ENCODE measurements at regions of chr2 and their contacts with region 1.

Region 1: GRCh38 chr2:1591978-1592907 is 152.1 kb downstream of the PXDN start:
- DNase-seq: peak; percentile 70 to 86 (median 83)
- ATAC-seq: peak; percentile 57 to 87 (median 81)
- H3K4me3 ChIP-seq: peak overlapping the region in 10 of 12 donors; percentile 4 to 40 (median 25)
- H3K27ac ChIP-seq: peak overlapping the region; percentile 24 to 77 (median 60)
- H3K4me1 ChIP-seq: peaks cover 0 to 43% (median 26%) of the 10 kb centered on the region in 12 donors
- H3K27me3 ChIP-seq: peaks cover 0 to 8% (median 0%) of the 10 kb centered on the region in 9 donors
- CTCF ChIP-seq: peak; percentile 42 to 78 (median 67)
- POLR2A ChIP-seq: peak in 1 of 2 donors; percentile 6

Region 2: DNA sequence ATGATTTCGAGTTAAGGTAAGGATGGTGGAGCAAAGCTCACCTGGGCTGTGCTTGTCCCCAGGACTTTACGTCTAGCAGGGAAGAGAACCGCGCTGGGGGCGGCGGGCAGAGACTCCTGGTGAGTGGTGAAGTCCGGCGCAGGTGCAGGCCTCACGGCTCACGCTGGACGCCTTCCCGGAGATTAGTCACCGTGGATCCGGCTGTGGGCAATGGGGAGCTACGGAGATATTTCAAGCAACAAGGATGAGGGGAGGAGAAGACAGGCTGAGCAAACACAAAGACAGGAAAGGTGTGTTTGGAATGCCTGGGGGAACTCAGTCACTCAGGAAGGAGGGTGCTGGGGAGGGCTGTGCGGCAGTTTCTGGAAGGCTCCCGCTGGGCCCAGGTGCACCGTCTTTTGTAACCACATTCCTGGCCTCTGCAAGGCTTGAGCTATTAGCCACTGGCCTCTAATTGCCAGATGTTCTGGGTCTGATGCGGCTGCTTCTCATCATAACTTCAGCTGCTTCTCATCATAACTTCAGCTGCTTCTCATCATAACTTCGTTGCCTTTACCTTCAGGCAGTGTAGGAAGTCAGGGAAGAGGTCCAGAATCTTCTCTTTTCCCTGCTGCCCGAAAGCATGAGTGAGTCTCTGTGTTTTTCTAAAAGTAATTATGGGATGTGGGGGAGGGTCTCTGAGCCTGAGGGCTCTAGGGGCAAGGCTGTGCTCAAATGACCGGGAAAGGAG is 33.1 kb after region 1 on chr2:
- intact Hi-C with region 1: no loop called
- DNase-seq: peak in 4 of 5 donors; percentile 49 to 64 (median 59)
- ATAC-seq: peak; percentile 60 to 83 (median 72)
- H3K4me3 ChIP-seq: no peak overlapping the region
- H3K27ac ChIP-seq: peak overlapping the region in 9 of 12 donors; percentile 2 to 55 (median 21)
- H3K4me1 ChIP-seq: peaks cover 0 to 28% (median 13%) of the 10 kb centered on the region in 12 donors
- H3K27me3 ChIP-seq: no peaks in the 10 kb centered on the region
- CTCF ChIP-seq: no peak
- POLR2A ChIP-seq: no peak

Region 3: DNA sequence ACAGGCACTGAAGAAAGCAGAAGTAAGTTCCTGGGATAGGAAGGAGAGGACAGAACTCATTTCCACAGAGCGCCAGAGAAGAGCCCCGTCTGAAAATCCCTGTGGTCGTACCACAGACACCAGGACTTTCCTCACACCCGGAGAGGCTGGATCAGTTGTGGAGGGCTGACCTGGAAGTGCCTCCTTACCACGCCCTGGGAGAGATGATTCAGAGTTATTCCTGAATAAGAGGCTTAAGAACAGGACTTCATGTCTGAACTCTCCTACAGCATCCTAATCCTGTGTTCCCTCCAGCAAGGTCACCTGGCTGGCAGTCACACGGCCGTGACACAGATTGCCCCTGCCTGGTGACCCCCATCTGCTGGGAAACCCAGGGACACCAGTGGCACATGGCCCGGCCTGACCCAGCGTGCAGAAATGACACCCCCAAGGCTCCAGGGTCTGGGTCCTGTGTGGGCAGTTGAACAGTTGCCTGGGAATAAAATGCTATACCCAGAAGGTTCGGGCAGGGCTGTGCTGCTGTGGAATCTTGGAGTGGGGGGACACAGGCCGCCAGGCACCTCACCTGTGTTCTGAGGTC is 46.1 kb after region 1 on chr2:
- intact Hi-C with region 1: loop called in 1 of 10 experiments (anchors 5 kb)
- DNase-seq: peak in 1 of 5 donors; percentile 11
- ATAC-seq: no peak
- H3K4me3 ChIP-seq: no peak overlapping the region
- H3K27ac ChIP-seq: no peak overlapping the region
- H3K4me1 ChIP-seq: peaks cover 0 to 23% (median 2%) of the 10 kb centered on the region in 12 donors
- H3K27me3 ChIP-seq: peaks cover 0 to 6% (median 0%) of the 10 kb centered on the region in 9 donors
- CTCF ChIP-seq: no peak
- POLR2A ChIP-seq: no peak

Region 4: GRCh38 chr2:1653956-1654695 is 61.9 kb after region 1 on chr2:
- intact Hi-C with region 1: loop called in 4 of 10 experiments (anchors 2 to 5 kb)
- DNase-seq: peak in 1 of 5 donors; percentile 27
- ATAC-seq: peak in 2 of 4 donors; percentile 20 to 59
- H3K4me3 ChIP-seq: peak overlapping the region in 1 of 12 donors; percentile 12
- H3K27ac ChIP-seq: peak overlapping the region; percentile 28 to 92 (median 68)
- H3K4me1 ChIP-seq: peaks cover 0 to 49% (median 24%) of the 10 kb centered on the region in 12 donors
- H3K27me3 ChIP-seq: no peaks in the 10 kb centered on the region
- CTCF ChIP-seq: no peak
- POLR2A ChIP-seq: no peak

Region 5: GRCh38 chr2:1750933-1751766 is 158.9 kb after region 1 on chr2:
- intact Hi-C with region 1: loop called in 8 of 10 experiments (anchors 2 to 5 kb)
- DNase-seq: peak; percentile 69 to 79 (median 71)
- ATAC-seq: peak; percentile 43 to 85 (median 79)
- H3K4me3 ChIP-seq: no peak overlapping the region
- H3K27ac ChIP-seq: no peak overlapping the region
- H3K4me1 ChIP-seq: peaks cover 0 to 15% (median 0%) of the 10 kb centered on the region in 12 donors
- H3K27me3 ChIP-seq: peaks cover 0 to 15% (median 0%) of the 10 kb centered on the region in 9 donors
- CTCF ChIP-seq: peak; percentile 70 to 90 (median 84)
- POLR2A ChIP-seq: no peak

Region 6: GRCh38 chr2:1823187-1824169 is 231.2 kb after region 1 on chr2:
- intact Hi-C with region 1: loop called in 3 of 10 experiments (anchors 5 to 10 kb)
- DNase-seq: no peak
- ATAC-seq: no peak
- H3K4me3 ChIP-seq: no peak overlapping the region
- H3K27ac ChIP-seq: peak overlapping the region in 2 of 12 donors; percentile 42 to 57
- H3K4me1 ChIP-seq: peaks cover 0 to 4% (median 0%) of the 10 kb centered on the region in 12 donors
- H3K27me3 ChIP-seq: peaks cover 0 to 22% (median 0%) of the 10 kb centered on the region in 9 donors
- CTCF ChIP-seq: no peak
- POLR2A ChIP-seq: no peak

Measured in heart left ventricle (tissue), 16 donors.